Calu3 (cell line): ENCODE measurements at regions of chr14 and their contacts with region 1.

Region 1: DNA sequence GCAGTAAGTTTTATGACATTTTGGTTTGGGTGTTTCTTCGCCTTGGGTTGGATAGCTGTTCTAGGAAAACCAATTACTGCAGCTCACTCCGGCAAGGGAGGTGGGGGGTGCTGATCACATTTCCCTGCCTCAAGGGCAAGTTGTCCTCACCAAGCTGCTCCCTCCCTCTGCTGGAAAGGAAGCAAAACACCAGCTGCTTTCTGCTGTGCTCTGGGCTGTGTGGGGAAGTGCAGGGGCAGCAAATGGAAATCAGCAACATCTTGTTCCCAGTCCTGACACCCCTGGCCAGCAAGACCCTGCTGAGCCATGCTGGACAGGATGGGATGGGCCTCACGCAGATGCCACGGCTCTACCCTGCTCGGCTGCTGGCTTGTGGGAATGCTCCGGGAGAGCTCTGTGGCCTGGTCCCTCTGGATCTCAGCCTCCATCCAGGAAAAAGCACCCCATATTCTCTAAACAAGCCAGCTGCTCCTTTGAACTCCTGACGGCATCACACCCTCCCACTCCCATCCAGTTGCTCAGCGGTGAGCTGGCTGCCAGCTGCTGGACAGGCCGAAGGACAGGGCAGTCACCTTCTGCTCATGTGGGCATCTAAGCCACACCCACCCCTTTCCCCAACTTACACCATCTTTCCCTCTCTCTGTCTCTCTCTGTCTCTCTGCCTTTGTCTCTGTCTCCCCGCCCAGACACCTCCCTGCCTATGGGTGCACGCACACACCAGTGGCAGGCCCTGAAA is 52.4 kb upstream of the EIF5 start:
- DNase-seq: peak; percentile 71
- H3K4me3 Mint-ChIP-seq: no peak overlapping the region
- H3K27ac Mint-ChIP-seq: no peak overlapping the region
- H3K4me1 Mint-ChIP-seq: peaks cover 40% of the 10 kb centered on the region
- H3K27me3 Mint-ChIP-seq: no peaks in the 10 kb centered on the region
- CTCF ChIP-seq: peak; percentile 38

Region 2: DNA sequence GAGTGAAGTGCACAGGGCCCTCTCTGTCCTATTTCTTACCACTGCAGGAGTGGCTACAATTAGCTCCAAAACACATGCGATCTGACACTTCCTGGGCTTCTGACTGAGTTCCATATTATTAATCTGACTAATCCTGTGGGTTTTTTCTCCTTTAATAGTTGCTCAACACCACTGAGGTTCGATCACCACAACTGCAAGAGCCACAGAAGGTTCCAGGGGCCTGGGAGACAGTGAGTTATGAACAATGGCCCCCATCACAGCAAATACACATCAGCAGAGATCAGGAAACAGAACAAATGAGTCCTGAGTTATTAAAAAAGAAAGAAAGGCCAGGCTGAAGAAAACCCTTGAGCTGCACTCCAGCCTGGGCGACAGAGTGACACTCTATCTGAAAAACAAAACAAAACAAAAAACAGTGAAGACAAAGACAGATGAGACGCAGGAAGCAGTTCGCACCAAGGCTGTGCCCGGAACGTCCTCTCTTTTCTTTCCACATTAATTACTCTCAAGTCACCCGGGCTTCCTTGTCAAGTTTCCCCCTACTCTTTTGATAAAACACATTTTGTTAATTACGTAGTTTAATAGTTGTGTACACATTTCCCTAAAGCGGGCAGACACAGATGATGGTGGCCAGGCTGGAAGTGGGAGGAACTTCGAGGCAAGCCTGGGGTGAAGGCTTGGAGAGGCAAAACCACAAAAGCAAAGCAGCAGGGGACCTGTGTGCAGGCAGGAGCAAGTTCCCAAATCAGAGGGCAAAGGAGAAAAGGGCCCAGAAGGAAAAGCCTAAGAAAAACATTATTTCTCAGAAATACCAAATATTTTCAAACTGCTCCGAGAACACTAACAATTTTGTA is 267.0 kb before region 1 on chr14:
- CTCF ChIA-PET with region 1: no interaction called
- intact Hi-C with region 1: no loop called
- DNase-seq: no peak
- H3K4me3 Mint-ChIP-seq: peak overlapping the region; percentile 7
- H3K27ac Mint-ChIP-seq: peak overlapping the region; percentile 32
- H3K4me1 Mint-ChIP-seq: peaks cover 33% of the 10 kb centered on the region
- H3K27me3 Mint-ChIP-seq: no peaks in the 10 kb centered on the region
- CTCF ChIP-seq: no peak

Region 3: GRCh38 chr14:103185051-103185992 is 96.3 kb before region 1 on chr14:
- CTCF ChIA-PET with region 1: interaction called, 6 read pairs
- intact Hi-C with region 1: loop called (anchors 2 kb)
- DNase-seq: peak; percentile 31
- H3K4me3 Mint-ChIP-seq: peak overlapping the region; percentile 17
- H3K27ac Mint-ChIP-seq: peak overlapping the region; percentile 89
- H3K4me1 Mint-ChIP-seq: peaks cover 25% of the 10 kb centered on the region
- H3K27me3 Mint-ChIP-seq: no peaks in the 10 kb centered on the region
- CTCF ChIP-seq: peak; percentile 69

Region 4: DNA sequence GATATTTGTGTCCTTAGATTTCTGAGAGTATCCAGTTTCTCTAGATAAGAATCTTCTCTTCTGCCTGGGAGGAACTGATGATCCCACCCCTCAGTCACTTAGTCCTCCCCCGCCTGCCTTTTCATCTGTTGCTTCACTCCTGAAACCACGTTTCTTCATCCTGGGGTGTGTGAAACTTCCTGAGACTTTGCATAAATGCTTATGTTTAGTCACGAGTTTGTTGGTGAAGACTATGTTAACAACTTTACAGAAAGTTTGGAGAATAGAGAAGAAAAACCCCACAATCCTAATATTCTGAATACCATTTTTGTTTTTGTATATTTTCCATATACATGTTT is 136.8 kb after region 1 on chr14:
- CTCF ChIA-PET with region 1: no interaction called
- intact Hi-C with region 1: no loop called
- DNase-seq: no peak
- H3K4me3 Mint-ChIP-seq: no peak overlapping the region
- H3K27ac Mint-ChIP-seq: no peak overlapping the region
- H3K4me1 Mint-ChIP-seq: peaks cover 46% of the 10 kb centered on the region
- H3K27me3 Mint-ChIP-seq: no peaks in the 10 kb centered on the region
- CTCF ChIP-seq: no peak